Aorta (tissue), 5 donors: ENCODE measurements at regions of chr1 and their contacts with region 1.

Region 1: DNA sequence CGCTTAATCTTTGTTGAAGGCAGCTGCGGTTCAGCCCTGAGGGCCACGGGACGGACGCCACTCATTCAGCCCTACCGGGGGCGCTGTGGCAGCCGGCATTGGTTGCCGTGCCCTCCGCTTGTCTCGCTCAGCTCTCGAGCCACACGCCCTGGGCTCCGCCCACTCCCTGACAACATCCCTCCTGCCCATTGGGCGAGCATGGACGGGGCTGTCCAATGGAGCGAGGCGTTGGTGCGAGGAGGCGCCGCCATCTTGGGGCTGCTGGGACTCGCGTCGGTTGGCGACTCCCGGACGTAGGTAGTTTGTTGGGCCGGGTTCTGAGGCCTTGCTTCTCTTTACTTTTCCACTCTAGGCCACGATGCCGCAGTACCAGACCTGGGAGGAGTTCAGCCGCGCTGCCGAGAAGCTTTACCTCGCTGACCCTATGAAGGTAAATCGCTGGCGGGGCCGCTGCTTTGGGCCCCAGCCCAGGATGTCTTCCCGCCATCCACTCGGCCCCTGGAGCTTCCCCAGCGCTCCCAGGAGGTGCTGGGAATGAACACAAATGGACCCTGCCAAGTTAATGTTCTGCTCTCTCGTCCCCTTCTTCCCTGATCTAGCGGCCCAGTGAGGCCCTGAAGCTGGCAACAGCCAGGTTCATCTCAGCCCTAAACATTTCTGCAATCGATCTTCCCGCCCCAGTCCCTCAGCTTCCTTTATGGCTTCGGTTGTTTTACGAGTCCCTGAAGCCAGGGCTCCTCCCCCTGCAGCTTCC is at the start of gene SRP9:
- DNase-seq: peak; percentile 99 to 100
- ATAC-seq: peak; percentile 100
- H3K4me3 ChIP-seq: peak within 1 kb of the TSS; percentile 43 to 89
- H3K27ac ChIP-seq: peak within 1 kb of the TSS; percentile 18 to 98
- H3K4me1 ChIP-seq: peaks cover 0 to 2% of the 10 kb centered on the region in 2 donors
- H3K27me3 ChIP-seq: no peaks in the 10 kb centered on the region
- total RNA-seq, gene SRP9: 128 to 140 TPM

Region 2: GRCh38 chr1:225817611-225818061 is 39.9 kb after region 1 on chr1:
- intact Hi-C with region 1: loop called in 1 of 2 experiments (anchors 5 kb)
- DNase-seq: peak; percentile 89 to 90
- ATAC-seq: peak; percentile 91
- H3K4me3 ChIP-seq: no peak overlapping the region
- H3K27ac ChIP-seq: peak overlapping the region; percentile 51 to 96
- H3K4me1 ChIP-seq: peaks cover 0 to 8% of the 10 kb centered on the region in 2 donors
- H3K27me3 ChIP-seq: no peaks in the 10 kb centered on the region

Region 3: DNA sequence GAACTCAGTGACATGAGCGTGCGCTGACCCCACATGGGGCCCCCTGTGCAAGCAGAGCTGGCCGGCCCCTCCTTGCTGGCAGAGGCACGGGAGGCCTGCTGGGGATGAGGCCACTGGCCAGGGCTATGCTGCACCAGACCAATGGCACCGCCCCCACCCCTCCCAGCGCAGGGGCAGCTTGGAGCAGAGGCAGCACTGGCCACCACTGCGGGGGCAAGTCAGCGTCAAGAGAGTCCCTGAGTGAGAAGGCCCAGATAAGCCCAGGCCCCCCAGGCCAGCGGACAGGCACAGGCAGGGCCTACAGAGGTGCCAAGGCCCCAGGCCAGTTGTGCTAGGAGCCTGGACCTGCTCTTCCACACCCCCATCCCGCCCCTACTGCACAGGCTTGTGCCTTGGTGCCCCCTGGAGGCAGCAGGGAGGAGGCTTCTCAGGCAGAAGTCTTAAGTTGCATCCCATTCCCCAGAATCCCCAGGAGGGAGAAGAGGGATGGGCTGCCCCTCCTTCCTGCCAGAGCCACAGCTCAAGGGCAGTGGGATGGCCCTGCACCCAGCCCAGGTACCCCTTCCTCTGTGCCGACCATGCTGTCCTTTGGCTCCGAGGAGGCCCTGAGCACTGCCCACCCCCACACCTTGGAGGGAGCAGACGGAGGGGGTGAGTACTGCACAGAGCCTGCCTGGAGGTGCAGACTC is 68.0 kb after region 1 on chr1:
- intact Hi-C with region 1: loop called (anchors 1 to 5 kb)
- DNase-seq: peak; percentile 86 to 92
- ATAC-seq: peak; percentile 89
- H3K4me3 ChIP-seq: no peak overlapping the region
- H3K27ac ChIP-seq: peak overlapping the region in 1 of 2 donors; percentile 0
- H3K4me1 ChIP-seq: no peaks in the 10 kb centered on the region
- H3K27me3 ChIP-seq: no peaks in the 10 kb centered on the region

Region 4: GRCh38 chr1:225911191-225912130 is 133.7 kb after region 1 on chr1:
- intact Hi-C with region 1: loop called (anchors 5 kb)
- DNase-seq: peak; percentile 72 to 92
- ATAC-seq: peak; percentile 90
- H3K4me3 ChIP-seq: no peak overlapping the region
- H3K27ac ChIP-seq: no peak overlapping the region
- H3K4me1 ChIP-seq: no peaks in the 10 kb centered on the region
- H3K27me3 ChIP-seq: no peaks in the 10 kb centered on the region

Region 5: GRCh38 chr1:225977937-225978748 is 200.4 kb after region 1 on chr1:
- intact Hi-C with region 1: loop called (anchors 10 kb)
- DNase-seq: no peak
- ATAC-seq: no peak
- H3K4me3 ChIP-seq: no peak overlapping the region
- H3K27ac ChIP-seq: no peak overlapping the region
- H3K4me1 ChIP-seq: no peaks in the 10 kb centered on the region
- H3K27me3 ChIP-seq: no peaks in the 10 kb centered on the region